ENCODE measurements at regions of chr15 and their contacts with region 1.

Region 1: GRCh38 chr15:35519541-35520149 is 26.3 kb downstream of the DPH6 start:
- DNase-seq: no peak
- H3K4me3 Mint-ChIP-seq: no peak overlapping the region
- H3K27ac Mint-ChIP-seq: no peak overlapping the region
- H3K4me1 Mint-ChIP-seq: no peaks in the 10 kb centered on the region
- H3K27me3 Mint-ChIP-seq: no peaks in the 10 kb centered on the region

Region 2: GRCh38 chr15:35540885-35541284 is 21.2 kb after region 1 on chr15:
- intact Hi-C with region 1: loop called (anchors 2 kb)
- DNase-seq: no peak
- H3K4me3 Mint-ChIP-seq: no peak overlapping the region
- H3K27ac Mint-ChIP-seq: no peak overlapping the region
- H3K4me1 Mint-ChIP-seq: peaks cover 9% of the 10 kb centered on the region
- H3K27me3 Mint-ChIP-seq: no peaks in the 10 kb centered on the region

Region 3: DNA sequence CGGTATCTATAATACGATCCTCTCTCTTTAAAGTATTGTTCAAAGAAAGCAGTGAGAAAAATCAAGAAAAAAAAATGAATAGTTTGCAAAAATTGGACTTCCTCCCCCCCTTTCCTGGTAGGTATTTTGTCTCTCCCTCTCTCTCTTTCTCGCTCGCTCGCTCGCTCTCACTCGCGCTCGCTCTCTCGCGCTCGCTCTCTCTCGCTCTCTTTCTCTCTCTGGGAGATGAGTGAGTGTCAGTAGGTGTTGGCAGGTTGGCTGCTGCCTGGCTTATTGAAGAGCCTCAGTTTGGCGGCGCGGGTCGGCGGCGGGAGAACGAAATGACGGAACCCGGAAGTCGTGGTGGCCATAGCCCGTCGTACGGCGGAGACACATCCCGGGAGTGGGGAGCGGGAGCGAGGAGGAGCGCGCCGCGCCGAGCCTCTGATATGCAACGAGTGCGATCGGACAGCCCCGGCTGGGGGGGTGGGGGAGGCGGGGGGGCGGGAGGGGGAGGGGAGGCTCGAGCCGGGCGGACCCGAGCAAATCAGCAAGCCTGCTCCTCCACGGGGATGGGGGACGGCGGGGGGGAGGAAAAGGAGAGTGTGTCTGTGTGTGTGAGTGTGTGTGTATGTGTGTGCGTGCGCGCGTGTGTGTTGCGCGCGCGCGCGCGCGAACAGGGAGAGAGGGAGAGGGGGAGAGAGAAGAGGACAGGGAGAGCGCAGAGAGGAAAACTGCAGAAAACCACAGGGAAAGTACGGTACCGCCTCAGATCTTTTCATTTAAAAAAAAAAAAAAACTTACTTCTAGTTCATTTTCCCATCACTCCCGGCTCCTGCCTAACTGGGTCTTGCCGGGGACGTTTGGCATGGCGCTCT is 1580.7 kb after region 1 on chr15 and contains the start of gene MEIS2:
- intact Hi-C with region 1: loop called (anchors 10 kb)
- DNase-seq: no peak
- H3K4me3 Mint-ChIP-seq: peak within 1 kb of the TSS; percentile 88
- H3K27ac Mint-ChIP-seq: peak within 1 kb of the TSS; percentile 53
- H3K4me1 Mint-ChIP-seq: peaks cover 23% of the 10 kb centered on the region
- H3K27me3 Mint-ChIP-seq: peaks cover 92% of the 10 kb centered on the region
- total RNA-seq, gene MEIS2: not detected in 2 replicates

Measured in activated T-helper 2 cell treated with anti-CD3 and anti-CD28 coated beads, Interferon-gamma antibody, Interleukin-2, Interleukin-4, amounts not matched to agents 10 μg/mL and 5 μg/mL and 100 μg/mL, durations not matched to agents 14 hours and 24 hours and 36 hours (primary cell).